Naive thymus-derived CD4-positive, alpha-beta T cell (primary cell): ENCODE measurements at regions of chr19 and their contacts with region 1.

Region 1: DNA sequence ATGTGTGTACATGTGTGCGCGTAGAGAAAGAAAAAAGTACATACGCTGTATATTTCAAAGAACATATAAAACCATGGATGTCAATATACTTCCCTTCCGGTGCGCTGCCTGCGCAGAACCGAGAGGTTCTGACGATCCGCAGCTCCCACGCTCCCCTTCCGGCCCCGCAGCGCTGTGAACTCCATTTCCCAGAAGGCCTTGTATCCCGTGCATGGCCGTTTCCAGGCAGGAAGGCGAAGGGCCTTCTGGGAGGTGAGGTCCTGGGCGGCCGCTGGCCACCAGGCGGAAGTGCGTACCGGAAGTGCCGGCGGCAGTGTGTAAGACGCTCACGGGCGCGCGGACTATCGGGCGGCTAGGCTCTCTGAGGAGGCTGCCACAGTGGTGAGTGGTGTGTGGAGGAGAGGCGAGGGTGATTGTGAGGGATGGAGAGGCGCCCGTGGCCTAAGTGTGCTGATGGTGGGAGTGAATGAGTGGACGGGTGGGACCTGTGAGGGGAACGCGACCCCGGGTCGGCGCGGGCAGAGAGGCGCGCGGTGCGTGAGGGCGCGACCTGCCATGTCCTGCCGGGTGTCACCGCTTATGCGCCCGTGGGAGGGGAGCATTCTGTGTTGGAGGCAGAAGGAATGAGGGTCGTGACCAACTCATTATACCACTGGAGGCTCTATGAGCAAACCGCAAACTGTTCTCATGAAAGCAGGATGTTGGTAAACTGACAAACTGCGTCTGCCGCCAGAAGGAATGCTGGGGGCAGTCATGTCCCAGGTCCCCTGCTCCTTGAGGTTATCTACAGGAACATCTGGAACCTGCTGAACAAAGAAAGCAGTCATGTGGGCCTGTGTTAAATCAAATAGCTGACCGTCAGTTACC is at the start of gene ERVK3-1:
- DNase-seq: peak; percentile 80 to 95 (median 93)
- ATAC-seq: peak; percentile 99
- H3K4me3 ChIP-seq: peak within 1 kb of the TSS; percentile 69
- H3K4me3 Mint-ChIP-seq: peak within 1 kb of the TSS; percentile 94 to 100 (median 98)
- H3K27ac ChIP-seq: peak within 1 kb of the TSS; percentile 91
- H3K27ac Mint-ChIP-seq: peak within 1 kb of the TSS; percentile 98 to 100 (median 99)
- H3K4me1 ChIP-seq: peaks cover 14 to 20% of the 10 kb centered on the region in 2 donors
- H3K4me1 Mint-ChIP-seq: peaks cover 33 to 64% (median 55%) of the 10 kb centered on the region in 7 donors
- H3K27me3 ChIP-seq: no peaks in the 10 kb centered on the region
- H3K27me3 Mint-ChIP-seq: no peaks in the 10 kb centered on the region
- total RNA-seq, gene ERVK3-1: 59.7 to 122 (median 65.4) TPM

Region 2: DNA sequence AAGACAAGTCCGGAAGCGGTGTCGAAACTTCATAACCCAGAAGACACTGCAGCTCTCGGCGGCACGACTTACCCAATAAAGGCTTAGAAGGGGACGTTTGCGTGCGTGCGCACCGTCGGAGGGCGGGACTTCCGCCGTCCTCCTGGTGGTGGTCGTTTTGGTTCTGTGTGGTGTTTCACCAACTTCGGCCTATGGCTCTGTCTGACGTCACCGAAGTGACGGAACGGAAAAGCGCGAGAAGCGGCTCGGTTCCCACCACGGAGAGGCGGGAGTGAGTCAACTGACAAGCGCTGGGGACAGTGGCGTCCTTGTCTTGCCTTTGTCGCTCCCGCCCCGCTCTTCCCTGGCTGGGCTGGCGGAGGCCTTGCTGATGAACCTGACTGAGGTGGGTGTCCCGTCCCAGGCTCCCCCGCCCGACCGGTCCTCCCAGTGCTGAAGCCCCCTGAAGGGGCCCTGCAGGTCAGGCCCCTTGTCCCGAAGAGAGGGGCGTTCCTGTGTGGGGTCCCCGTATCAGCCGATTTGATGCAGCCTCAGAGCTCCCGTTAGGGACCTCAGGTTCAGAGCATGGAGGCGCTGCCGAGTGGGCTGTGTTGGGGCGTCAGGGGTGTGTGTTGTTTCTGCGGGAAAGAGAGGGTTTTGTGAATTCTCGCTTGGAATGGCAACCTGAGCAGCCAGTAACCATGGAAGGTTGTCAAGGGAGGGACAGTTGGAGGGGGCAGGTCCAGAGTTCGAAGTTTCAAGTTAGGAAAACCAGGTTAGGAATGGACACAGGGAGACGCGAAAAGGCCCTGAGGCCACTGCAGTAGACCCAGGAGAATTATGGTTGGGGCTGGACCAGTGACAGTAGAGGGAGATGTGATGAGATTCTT is 915.3 kb before region 1 on chr19 and contains the start of gene ZNF548:
- CTCF ChIA-PET with region 1: no interaction called
- POLR2A ChIA-PET with region 1: no interaction called
- intact Hi-C with region 1: loop called in 1 of 2 experiments (anchors 1 kb)
- DNase-seq: peak; percentile 85 to 99 (median 92)
- ATAC-seq: peak; percentile 98
- H3K4me3 ChIP-seq: peak within 1 kb of the TSS; percentile 72
- H3K4me3 Mint-ChIP-seq: peak within 1 kb of the TSS; percentile 89 to 100 (median 97)
- H3K27ac ChIP-seq: peak within 1 kb of the TSS; percentile 93
- H3K27ac Mint-ChIP-seq: peak within 1 kb of the TSS; percentile 91 to 100 (median 97)
- H3K4me1 ChIP-seq: peaks cover 13 to 15% of the 10 kb centered on the region in 2 donors
- H3K4me1 Mint-ChIP-seq: peaks cover 11 to 45% (median 29%) of the 10 kb centered on the region in 7 donors
- H3K27me3 ChIP-seq: no peaks in the 10 kb centered on the region
- H3K27me3 Mint-ChIP-seq: no peaks in the 10 kb centered on the region
- total RNA-seq, gene ZNF548: 26.4 to 115 (median 66.9) TPM

Region 3: GRCh38 chr19:58228585-58229254 is 76.6 kb before region 1 on chr19 and contains the start of gene ZNF544:
- CTCF ChIA-PET with region 1: no interaction called
- POLR2A ChIA-PET with region 1: no interaction called
- intact Hi-C with region 1: loop called (anchors 1 kb)
- DNase-seq: peak; percentile 25 to 74 (median 39)
- ATAC-seq: peak; percentile 79
- H3K4me3 ChIP-seq: peak within 1 kb of the TSS; percentile 86
- H3K4me3 Mint-ChIP-seq: peak within 1 kb of the TSS; percentile 89 to 95 (median 94)
- H3K27ac ChIP-seq: peak within 1 kb of the TSS; percentile 73
- H3K27ac Mint-ChIP-seq: peak within 1 kb of the TSS in 8 of 9 donors; percentile 76 to 94 (median 84)
- H3K4me1 ChIP-seq: peaks cover 10% of the 10 kb centered on the region in 2 donors
- H3K4me1 Mint-ChIP-seq: peaks cover 19 to 36% (median 28%) of the 10 kb centered on the region in 7 donors
- H3K27me3 ChIP-seq: no peaks in the 10 kb centered on the region
- H3K27me3 Mint-ChIP-seq: no peaks in the 10 kb centered on the region
- total RNA-seq, gene ZNF544: 19.7 to 60.7 (median 42.1) TPM

Region 4: GRCh38 chr19:58261600-58261967 is 43.7 kb before region 1 on chr19:
- CTCF ChIA-PET with region 1: no interaction called
- POLR2A ChIA-PET with region 1: no interaction called
- intact Hi-C with region 1: no loop called
- DNase-seq: no peak
- ATAC-seq: no peak
- H3K4me3 ChIP-seq: peak overlapping the region; percentile 19
- H3K4me3 Mint-ChIP-seq: no peak overlapping the region
- H3K27ac ChIP-seq: no peak overlapping the region
- H3K27ac Mint-ChIP-seq: no peak overlapping the region
- H3K4me1 ChIP-seq: no peaks in the 10 kb centered on the region
- H3K4me1 Mint-ChIP-seq: peaks cover 0 to 4% (median 0%) of the 10 kb centered on the region in 7 donors
- H3K27me3 ChIP-seq: no peaks in the 10 kb centered on the region
- H3K27me3 Mint-ChIP-seq: no peaks in the 10 kb centered on the region

Region 5: GRCh38 chr19:58362272-58362994 is 57.1 kb after region 1 on chr19 and contains the start of gene ZNF497:
- CTCF ChIA-PET with region 1: no interaction called
- POLR2A ChIA-PET with region 1: interaction called, 18 read pairs
- intact Hi-C with region 1: loop called (anchors 1 kb)
- DNase-seq: peak; percentile 91 to 96 (median 95)
- ATAC-seq: peak; percentile 92
- H3K4me3 ChIP-seq: peak within 1 kb of the TSS; percentile 99
- H3K4me3 Mint-ChIP-seq: peak within 1 kb of the TSS; percentile 89 to 99 (median 95)
- H3K27ac ChIP-seq: peak within 1 kb of the TSS; percentile 78
- H3K27ac Mint-ChIP-seq: peak within 1 kb of the TSS; percentile 71 to 96 (median 90)
- H3K4me1 ChIP-seq: peaks cover 5 to 7% of the 10 kb centered on the region in 2 donors
- H3K4me1 Mint-ChIP-seq: peaks cover 7 to 21% (median 11%) of the 10 kb centered on the region in 7 donors
- H3K27me3 ChIP-seq: no peaks in the 10 kb centered on the region
- H3K27me3 Mint-ChIP-seq: peaks cover 0 to 5% (median 0%) of the 10 kb centered on the region in 5 donors
- total RNA-seq, gene ZNF497: 1.0 to 2.7 (median 1.8) TPM

Region 6: GRCh38 chr19:58408152-58409009 is 103.1 kb after region 1 on chr19 and contains the start of gene ZNF584:
- CTCF ChIA-PET with region 1: no interaction called
- POLR2A ChIA-PET with region 1: interaction called, 3 read pairs
- intact Hi-C with region 1: loop called (anchors 1 kb)
- DNase-seq: peak; percentile 86 to 94 (median 92)
- ATAC-seq: peak; percentile 98
- H3K4me3 ChIP-seq: peak within 1 kb of the TSS; percentile 96
- H3K4me3 Mint-ChIP-seq: peak within 1 kb of the TSS; percentile 82 to 98 (median 95)
- H3K27ac ChIP-seq: peak within 1 kb of the TSS; percentile 87
- H3K27ac Mint-ChIP-seq: peak within 1 kb of the TSS; percentile 83 to 95 (median 93)
- H3K4me1 ChIP-seq: peaks cover 12 to 15% of the 10 kb centered on the region in 2 donors
- H3K4me1 Mint-ChIP-seq: peaks cover 5 to 45% (median 34%) of the 10 kb centered on the region in 7 donors
- H3K27me3 ChIP-seq: no peaks in the 10 kb centered on the region
- H3K27me3 Mint-ChIP-seq: no peaks in the 10 kb centered on the region
- total RNA-seq, gene ZNF584: 4.2 to 12.1 (median 8.8) TPM

Region 7: DNA sequence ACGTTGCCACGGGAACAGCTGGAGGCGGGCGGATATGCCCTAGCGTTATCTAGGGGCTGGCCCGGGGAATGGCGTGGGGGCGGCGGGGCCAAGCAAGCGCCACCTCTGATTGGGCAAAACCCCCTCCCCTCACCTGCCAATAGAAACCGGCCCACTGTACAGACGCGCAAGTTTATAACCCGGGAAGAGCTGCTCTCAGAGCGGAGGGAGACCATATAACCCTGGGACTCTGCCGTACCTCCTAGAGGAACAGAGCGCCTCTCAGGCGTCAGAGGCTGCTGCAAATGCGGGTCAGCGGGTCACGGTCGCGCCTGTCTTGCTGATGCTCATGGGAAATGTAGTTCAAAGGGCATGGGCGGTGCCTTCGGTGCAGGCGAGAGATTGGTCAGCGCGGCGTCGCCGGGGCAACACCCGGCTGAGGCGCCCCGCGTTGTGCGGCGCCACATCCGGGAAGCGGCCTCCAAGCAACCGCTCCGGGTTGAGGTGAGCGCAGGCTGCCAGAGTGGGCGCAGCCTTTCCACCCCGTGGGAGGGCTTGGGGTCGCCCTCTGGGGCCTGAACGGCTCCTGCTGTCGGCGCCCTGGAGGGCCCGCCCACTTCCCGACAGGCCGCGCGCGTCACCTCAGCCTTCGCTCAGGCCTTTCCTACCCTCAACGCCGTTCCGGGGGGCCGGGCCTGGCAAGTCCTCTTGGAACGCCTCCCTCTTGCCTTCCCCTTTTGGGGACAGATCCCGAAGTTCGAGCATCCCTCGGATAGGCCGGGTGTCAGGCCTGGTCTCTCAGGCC is 170.6 kb after region 1 on chr19 and contains the start of gene ZNF446:
- CTCF ChIA-PET with region 1: no interaction called
- POLR2A ChIA-PET with region 1: no interaction called
- intact Hi-C with region 1: loop called in 1 of 2 experiments (anchors 1 kb)
- DNase-seq: peak; percentile 84 to 97 (median 96)
- ATAC-seq: peak; percentile 92
- H3K4me3 ChIP-seq: peak within 1 kb of the TSS; percentile 77
- H3K4me3 Mint-ChIP-seq: peak within 1 kb of the TSS; percentile 78 to 99 (median 96)
- H3K27ac ChIP-seq: peak within 1 kb of the TSS; percentile 91
- H3K27ac Mint-ChIP-seq: peak within 1 kb of the TSS; percentile 87 to 100 (median 99)
- H3K4me1 ChIP-seq: peaks cover 14 to 16% of the 10 kb centered on the region in 2 donors
- H3K4me1 Mint-ChIP-seq: peaks cover 6 to 29% (median 17%) of the 10 kb centered on the region in 7 donors
- H3K27me3 ChIP-seq: no peaks in the 10 kb centered on the region
- H3K27me3 Mint-ChIP-seq: no peaks in the 10 kb centered on the region
- total RNA-seq, gene ZNF446: 9.5 to 20.0 (median 15.1) TPM